GM23248 (cell line): ENCODE measurements at regions of chr13 and their contacts with region 1.

Region 1: GRCh38 chr13:73708393-73708985 is 425.7 kb downstream of the KLF12 start:
- DNase-seq: peak; percentile 71
- H3K4me3 ChIP-seq: no peak overlapping the region
- H3K27ac ChIP-seq: no peak overlapping the region
- H3K4me1 ChIP-seq: no peaks in the 10 kb centered on the region
- H3K27me3 ChIP-seq: no peaks in the 10 kb centered on the region

Region 2: DNA sequence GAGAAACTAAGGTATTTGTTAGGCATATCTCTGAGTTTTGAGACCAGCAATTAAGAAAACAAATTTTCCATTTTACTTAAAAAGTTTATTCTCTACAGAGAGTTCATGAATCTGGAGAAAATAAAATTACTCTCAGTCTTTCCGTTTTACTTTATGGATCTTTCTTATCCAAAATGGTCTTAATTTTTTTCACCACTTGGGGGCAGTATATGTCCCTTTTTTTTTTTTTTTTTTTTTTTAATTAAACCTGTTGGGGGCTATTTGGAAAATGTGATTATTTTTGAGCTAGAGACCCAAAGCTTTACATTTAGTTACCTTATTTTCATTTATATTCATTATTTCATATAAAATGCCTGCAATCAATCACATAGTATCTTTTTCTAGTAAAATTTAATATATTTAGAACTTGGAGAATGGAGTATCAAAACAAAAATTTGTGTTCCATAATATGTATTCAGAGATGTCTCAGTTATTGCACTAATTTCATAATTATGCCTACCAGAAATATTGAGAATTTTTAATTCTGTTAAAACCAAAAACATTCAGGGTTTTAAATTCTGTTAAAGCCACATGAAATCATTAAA is 899.5 kb before region 1 on chr13:
- in situ Hi-C with region 1: loop called (anchors 25 kb)
- DNase-seq: peak; percentile 25
- H3K4me3 ChIP-seq: no peak overlapping the region
- H3K27ac ChIP-seq: no peak overlapping the region
- H3K4me1 ChIP-seq: no peaks in the 10 kb centered on the region
- H3K27me3 ChIP-seq: no peaks in the 10 kb centered on the region

Region 3: GRCh38 chr13:73058736-73059459 is 649.6 kb before region 1 on chr13 and contains the start of gene KLF5:
- in situ Hi-C with region 1: loop called (anchors 25 kb)
- DNase-seq: peak; percentile 98
- H3K4me3 ChIP-seq: peak within 1 kb of the TSS; percentile 83
- H3K27ac ChIP-seq: peak within 1 kb of the TSS; percentile 59; the same call in 1 of the 2 replicates
- H3K4me1 ChIP-seq: peaks cover 28% of the 10 kb centered on the region
- H3K27me3 ChIP-seq: no peaks in the 10 kb centered on the region
- total RNA-seq, gene KLF5: 5.5 and 6.1 TPM in 2 replicates